Ascending aorta (tissue), 2 donors: ENCODE measurements at regions of chr2 and their contacts with region 1.

Region 1: GRCh38 chr2:235433860-235434259 is 60.0 kb upstream of the AGAP1 start:
- DNase-seq: peak in 1 of 2 donors; percentile 81
- H3K4me3 ChIP-seq: peak overlapping the region in 1 of 2 donors; percentile 47
- H3K27ac ChIP-seq: peak overlapping the region; percentile 52 to 73
- H3K4me1 ChIP-seq: peaks cover 0 to 3% of the 10 kb centered on the region in 2 donors
- H3K27me3 ChIP-seq: no peaks in the 10 kb centered on the region
- CTCF ChIP-seq: no peak

Region 2: DNA sequence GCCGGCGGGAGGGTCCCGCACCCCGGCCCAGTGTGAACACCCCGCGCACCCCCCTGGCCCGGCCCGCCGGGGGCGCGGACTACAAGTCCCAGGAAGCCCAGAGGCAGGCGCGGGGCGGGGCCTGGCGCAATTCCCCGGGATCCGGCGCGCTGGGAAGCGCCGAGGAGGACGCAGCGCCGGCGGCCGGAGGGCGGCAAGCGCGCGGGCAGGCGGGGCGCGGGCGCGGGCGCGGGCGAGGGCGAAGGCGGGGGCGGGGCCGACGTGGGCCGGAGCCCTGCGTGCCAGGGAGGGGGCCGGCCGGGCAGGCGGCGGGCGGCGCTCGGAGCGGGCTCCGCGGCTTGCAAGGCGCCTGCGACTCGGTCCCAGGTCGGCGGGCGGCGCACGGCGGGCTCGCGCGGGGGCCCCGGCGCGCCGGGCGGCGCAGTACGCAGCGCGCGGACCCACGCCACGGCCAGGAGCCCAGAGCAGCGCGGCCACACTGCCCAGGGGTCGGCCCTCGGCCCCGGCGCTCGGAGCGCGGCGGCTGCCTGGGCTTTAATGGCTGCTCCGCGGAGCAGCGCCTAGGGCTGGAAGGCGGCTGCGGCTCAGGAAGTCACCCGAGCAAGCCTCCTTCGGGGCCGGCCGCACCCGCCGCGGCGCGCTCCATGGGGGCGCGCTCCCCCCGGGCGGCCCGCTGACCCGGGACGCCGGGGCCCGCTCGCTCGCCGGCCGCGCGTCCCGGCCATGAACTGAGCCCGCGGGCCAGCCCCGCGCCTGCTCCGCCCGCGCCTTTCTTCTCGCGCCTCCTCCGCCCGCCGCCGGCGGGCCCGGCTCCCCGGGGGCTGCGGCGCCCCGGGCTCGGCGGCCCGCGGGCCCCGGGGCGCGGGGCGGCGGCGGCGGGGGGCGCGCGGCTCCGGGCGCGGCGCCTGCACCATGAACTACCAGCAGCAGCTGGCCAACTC is 60.2 kb after region 1 on chr2 and contains the start of gene AGAP1:
- intact Hi-C with region 1: loop called (anchors 2 kb)
- DNase-seq: peak in 1 of 2 donors; percentile 93
- H3K4me3 ChIP-seq: peak within 1 kb of the TSS; percentile 76 to 84
- H3K27ac ChIP-seq: peak within 1 kb of the TSS; percentile 61 to 83
- H3K4me1 ChIP-seq: peaks cover 3 to 15% of the 10 kb centered on the region in 2 donors
- H3K27me3 ChIP-seq: no peaks in the 10 kb centered on the region
- CTCF ChIP-seq: no peak
- total RNA-seq, gene AGAP1: 19.7 TPM

Region 3: GRCh38 chr2:235709124-235709813 is 275.4 kb after region 1 on chr2:
- intact Hi-C with region 1: no loop called
- DNase-seq: no peak
- H3K4me3 ChIP-seq: no peak overlapping the region
- H3K27ac ChIP-seq: no peak overlapping the region
- H3K4me1 ChIP-seq: no peaks in the 10 kb centered on the region
- H3K27me3 ChIP-seq: no peaks in the 10 kb centered on the region
- CTCF ChIP-seq: no peak